ENCODE measurements at regions of chr11 and their contacts with region 1.

Region 1: DNA sequence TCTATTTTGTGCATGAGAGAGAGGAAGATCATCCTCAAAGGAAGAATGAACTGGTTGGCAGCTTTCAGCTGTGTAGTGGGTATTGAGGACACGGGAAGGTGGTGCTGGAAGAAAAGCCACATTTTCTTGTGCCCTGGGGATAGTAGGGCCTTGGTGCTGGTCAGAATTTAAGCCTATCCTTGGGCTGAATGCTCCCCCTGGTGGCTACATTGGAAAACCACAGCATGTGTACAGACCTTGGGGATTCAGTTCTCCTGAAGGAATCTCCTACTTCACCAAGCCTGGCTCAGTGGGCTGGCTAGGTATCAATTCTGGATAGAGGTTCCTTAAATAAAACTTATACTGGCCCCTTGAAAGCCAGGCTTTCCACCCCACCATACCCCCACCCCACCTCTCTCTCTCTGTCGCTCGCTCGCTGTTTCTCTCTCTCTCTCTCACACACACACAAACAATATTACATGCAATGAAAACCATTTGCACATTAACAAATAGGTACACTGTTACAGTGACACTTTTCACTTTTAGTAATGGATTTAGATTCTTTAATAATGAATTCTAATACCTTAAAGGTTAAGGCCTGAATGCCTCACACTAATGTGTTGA is 2.8 kb upstream of the OR51M1 start:
- DNase-seq: peak; percentile 52
- H3K4me3 Mint-ChIP-seq: no peak overlapping the region
- H3K27ac Mint-ChIP-seq: no peak overlapping the region
- H3K4me1 Mint-ChIP-seq: no peaks in the 10 kb centered on the region
- H3K27me3 Mint-ChIP-seq: no peaks in the 10 kb centered on the region

Region 2: DNA sequence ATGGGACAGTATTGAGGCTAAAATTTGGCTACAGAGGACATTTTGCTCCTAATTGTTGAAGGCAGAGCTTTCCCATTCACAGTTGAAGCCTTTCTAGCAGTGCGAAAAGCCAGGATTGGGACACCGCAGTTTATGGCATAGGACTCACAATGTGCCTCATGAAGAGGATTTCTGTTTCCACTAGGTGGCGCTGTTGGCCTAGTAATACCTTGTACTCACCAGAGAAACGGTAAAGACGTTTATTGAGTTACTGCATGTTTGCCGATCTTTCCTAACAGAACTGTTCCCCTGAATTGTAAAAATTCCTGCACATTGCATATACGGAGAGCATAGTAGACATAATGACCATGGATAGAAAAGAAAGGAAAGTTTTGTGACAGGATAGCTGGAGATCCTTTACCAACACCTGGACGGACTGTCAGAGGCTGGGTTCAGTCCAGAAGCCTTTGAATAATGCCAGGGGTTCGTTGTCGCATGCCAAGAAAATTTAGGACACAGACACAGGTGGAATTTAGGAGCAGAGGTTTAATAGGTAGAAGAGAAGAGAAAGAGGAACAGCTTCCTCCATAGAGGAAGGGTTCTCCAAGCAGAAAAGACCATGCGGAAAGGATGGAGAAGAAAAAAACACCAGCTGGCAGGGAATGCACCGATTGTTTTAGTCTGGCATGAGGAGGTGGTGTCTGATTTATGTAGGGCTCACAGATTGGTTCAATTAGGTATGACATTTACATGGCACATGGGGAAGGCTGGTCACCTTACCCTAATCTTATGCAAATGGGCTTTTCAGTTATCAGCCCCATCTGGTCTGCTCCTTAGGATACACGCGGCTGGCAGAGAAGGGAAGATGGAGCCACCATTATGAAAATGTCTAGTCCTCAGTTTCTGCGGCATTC is 754.4 kb before region 1 on chr11:
- CTCF ChIA-PET with region 1: no interaction called
- intact Hi-C with region 1: loop called (anchors 1 kb)
- DNase-seq: peak; percentile 81
- H3K4me3 Mint-ChIP-seq: no peak overlapping the region
- H3K27ac Mint-ChIP-seq: no peak overlapping the region
- H3K4me1 Mint-ChIP-seq: no peaks in the 10 kb centered on the region
- H3K27me3 Mint-ChIP-seq: peaks cover 34% of the 10 kb centered on the region

Region 3: GRCh38 chr11:4991060-4991459 is 389.8 kb before region 1 on chr11:
- CTCF ChIA-PET with region 1: no interaction called
- intact Hi-C with region 1: no loop called
- DNase-seq: no peak
- H3K4me3 Mint-ChIP-seq: no peak overlapping the region
- H3K27ac Mint-ChIP-seq: no peak overlapping the region
- H3K4me1 Mint-ChIP-seq: no peaks in the 10 kb centered on the region
- H3K27me3 Mint-ChIP-seq: peaks cover 4% of the 10 kb centered on the region

Region 4: DNA sequence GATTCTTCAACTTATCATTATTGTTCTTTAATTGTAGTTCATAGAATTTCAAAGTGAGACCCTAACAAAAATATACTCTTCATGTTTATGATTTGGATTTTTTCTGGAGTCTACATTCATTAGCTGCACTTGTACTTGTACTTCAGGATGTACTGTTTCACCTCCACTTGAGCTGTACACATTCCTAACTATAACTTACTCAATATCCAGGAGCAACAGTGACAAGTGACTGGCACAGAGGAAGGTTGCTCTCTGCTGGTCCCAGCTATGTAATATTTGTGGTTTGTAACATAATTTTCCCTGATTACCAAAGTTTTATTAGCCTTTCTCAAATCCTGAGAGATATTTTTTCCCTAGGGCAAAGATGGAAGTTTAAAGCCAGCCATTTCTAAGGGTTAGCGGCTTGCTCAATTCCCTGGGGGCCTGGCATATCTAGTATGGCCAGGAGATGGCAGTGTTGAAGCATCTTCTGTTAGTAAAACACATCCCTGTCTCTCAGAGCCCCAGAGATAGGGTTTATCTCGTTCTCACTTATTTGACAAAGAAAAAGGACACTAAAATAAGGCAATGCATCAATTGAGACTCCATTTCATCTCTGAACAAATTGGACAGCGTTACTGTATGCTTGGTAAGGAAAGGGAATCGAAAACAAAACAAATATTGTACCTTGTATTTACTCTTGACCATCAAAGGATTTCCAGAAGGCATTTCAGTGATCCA is 256.9 kb before region 1 on chr11:
- CTCF ChIA-PET with region 1: no interaction called
- intact Hi-C with region 1: loop called (anchors 1 kb)
- DNase-seq: peak; percentile 74
- H3K4me3 Mint-ChIP-seq: no peak overlapping the region
- H3K27ac Mint-ChIP-seq: no peak overlapping the region
- H3K4me1 Mint-ChIP-seq: no peaks in the 10 kb centered on the region
- H3K27me3 Mint-ChIP-seq: peaks cover 22% of the 10 kb centered on the region

Measured in activated naive CD4-positive, alpha-beta T cell treated with anti-CD3 and anti-CD28 coated beads for 36 hours (primary cell).